Activated T-helper 2 cell treated with anti-CD3 and anti-CD28 coated beads, Interferon-gamma antibody, Interleukin-2, Interleukin-4, amounts not matched to agents 10 μg/mL and 5 μg/mL and 100 μg/mL, durations not matched to agents 14 hours and 24 hours and 36 hours (primary cell): ENCODE measurements at regions of chr12 and their contacts with region 1.

Region 1: GRCh38 chr12:57012600-57013465 is 3.5 kb downstream of the TAC3 start:
- DNase-seq: no peak
- H3K4me3 Mint-ChIP-seq: no peak overlapping the region
- H3K27ac Mint-ChIP-seq: no peak overlapping the region
- H3K4me1 Mint-ChIP-seq: peaks cover 25% of the 10 kb centered on the region
- H3K27me3 Mint-ChIP-seq: peaks cover 10% of the 10 kb centered on the region

Region 2: GRCh38 chr12:57031138-57031725 is 18.4 kb after region 1 on chr12:
- intact Hi-C with region 1: loop called (anchors 2 kb)
- DNase-seq: no peak
- H3K4me3 Mint-ChIP-seq: no peak overlapping the region
- H3K27ac Mint-ChIP-seq: no peak overlapping the region
- H3K4me1 Mint-ChIP-seq: peaks cover 31% of the 10 kb centered on the region
- H3K27me3 Mint-ChIP-seq: no peaks in the 10 kb centered on the region

Region 3: GRCh38 chr12:57046947-57047890 is 34.4 kb after region 1 on chr12:
- intact Hi-C with region 1: loop called (anchors 5 kb)
- DNase-seq: peak; percentile 39
- H3K4me3 Mint-ChIP-seq: peak overlapping the region; percentile 3
- H3K27ac Mint-ChIP-seq: peak overlapping the region; percentile 87
- H3K4me1 Mint-ChIP-seq: peaks cover 45% of the 10 kb centered on the region
- H3K27me3 Mint-ChIP-seq: no peaks in the 10 kb centered on the region